Activated CD4-positive, alpha-beta T cell treated with anti-CD3 and anti-CD28 coated beads, Interleukin-2, amount 10 ng/mL, durations not matched to agents 24 days and 14 days (primary cell): ENCODE measurements at regions of chr14 and their contacts with region 1.

Region 1: DNA sequence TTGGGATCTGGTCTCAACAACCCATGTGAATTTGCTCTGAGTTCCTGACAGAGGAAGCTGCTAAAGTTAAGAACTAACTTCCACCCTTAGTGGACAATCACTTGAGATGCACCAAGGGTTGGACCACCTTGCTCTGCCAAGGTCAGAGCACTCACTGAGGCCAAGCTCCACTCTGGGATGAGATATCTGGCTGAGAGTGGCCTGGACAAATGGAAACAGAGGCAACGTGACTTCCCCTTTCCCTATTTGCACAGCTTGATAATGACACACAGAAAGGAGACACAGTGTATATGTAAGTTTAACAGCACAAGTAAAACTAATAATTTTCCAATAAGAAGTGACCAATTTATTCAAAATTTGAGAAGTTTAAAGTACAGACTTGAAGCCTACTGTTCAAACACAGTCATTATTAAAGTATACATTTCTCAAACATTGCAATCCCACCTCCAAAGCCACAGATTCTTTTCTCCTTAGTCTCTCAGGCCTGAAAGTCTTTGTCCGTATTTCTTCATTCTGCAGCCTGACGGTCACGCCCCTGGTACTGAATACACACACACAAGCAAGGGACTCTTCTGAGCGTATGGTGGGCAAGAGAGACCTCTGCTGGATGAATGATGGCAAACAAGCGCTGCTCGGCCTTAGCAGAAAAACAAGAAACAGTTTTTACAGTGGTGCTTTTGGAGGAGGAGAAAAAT is 28.6 kb downstream of the TMEM30B start:
- DNase-seq: peak; percentile 89
- H3K4me3 Mint-ChIP-seq: no peak overlapping the region
- H3K27ac Mint-ChIP-seq: no peak overlapping the region
- H3K4me1 Mint-ChIP-seq: peaks cover 15% of the 10 kb centered on the region
- H3K27me3 Mint-ChIP-seq: peaks cover 20% of the 10 kb centered on the region

Region 2: GRCh38 chr14:60349663-60350365 is 902.7 kb before region 1 on chr14:
- intact Hi-C with region 1: loop called (anchors 2 kb)
- DNase-seq: peak; percentile 72
- H3K4me3 Mint-ChIP-seq: no peak overlapping the region
- H3K27ac Mint-ChIP-seq: no peak overlapping the region
- H3K4me1 Mint-ChIP-seq: no peaks in the 10 kb centered on the region
- H3K27me3 Mint-ChIP-seq: peaks cover 24% of the 10 kb centered on the region

Region 3: GRCh38 chr14:60622917-60623257 is 629.6 kb before region 1 on chr14:
- intact Hi-C with region 1: loop called (anchors 1 kb)
- DNase-seq: no peak
- H3K4me3 Mint-ChIP-seq: no peak overlapping the region
- H3K27ac Mint-ChIP-seq: no peak overlapping the region
- H3K4me1 Mint-ChIP-seq: no peaks in the 10 kb centered on the region
- H3K27me3 Mint-ChIP-seq: peaks cover 22% of the 10 kb centered on the region

Region 4: GRCh38 chr14:60724137-60724619 is 528.3 kb before region 1 on chr14 and contains the start of gene SIX4:
- intact Hi-C with region 1: loop called (anchors 2 kb)
- DNase-seq: peak; percentile 63
- H3K4me3 Mint-ChIP-seq: peak within 1 kb of the TSS; percentile 90
- H3K27ac Mint-ChIP-seq: peak within 1 kb of the TSS; percentile 60
- H3K4me1 Mint-ChIP-seq: peaks cover 24% of the 10 kb centered on the region
- H3K27me3 Mint-ChIP-seq: peaks cover 77% of the 10 kb centered on the region
- total RNA-seq, gene SIX4: 0.23 and 0.52 TPM in 2 replicates

Region 5: DNA sequence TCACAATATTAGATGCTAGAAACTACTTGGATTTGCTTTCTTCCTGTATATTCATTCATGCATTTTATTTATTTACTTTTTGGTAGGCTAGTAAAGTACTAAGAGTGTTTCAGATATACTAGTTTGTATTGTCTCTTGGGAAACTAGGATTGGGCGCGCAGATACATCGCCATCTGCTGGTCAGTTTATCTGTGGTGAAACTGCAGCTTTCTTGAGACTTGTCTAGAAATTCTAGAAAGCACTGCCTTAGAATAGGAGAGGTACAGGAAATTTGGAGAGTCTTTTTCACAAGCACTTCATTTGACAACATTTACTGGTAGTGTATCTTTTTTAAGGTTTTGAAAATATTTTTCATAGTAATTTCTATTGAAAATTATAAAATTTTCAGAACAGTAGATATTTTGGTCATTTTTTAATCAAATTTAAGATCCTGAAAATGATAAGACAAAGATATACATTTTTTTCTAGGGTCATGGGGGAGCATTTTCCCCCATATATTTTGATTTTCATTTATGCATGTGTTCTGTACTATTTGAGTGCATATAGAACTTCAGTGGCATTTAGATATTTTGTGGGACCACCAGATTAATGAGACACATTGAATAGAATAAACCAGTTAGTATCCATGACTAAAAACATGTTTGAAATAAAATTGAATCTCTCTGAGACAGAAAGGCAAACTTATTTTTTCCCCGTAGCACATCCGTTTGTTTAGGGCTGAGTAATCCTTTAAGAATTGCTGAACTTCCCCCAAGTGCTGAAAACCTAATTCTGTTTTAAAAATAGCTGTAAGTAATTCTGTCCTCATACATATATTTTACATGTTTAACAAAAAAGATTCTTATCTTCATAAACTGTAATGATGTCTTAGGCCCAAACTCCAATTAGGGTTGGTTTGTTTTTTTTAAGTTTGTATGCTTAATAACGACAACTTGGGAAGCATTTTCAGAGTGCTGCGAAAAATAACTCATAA is 227.0 kb before region 1 on chr14:
- intact Hi-C with region 1: loop called (anchors 2 kb)
- DNase-seq: peak; percentile 87
- H3K4me3 Mint-ChIP-seq: no peak overlapping the region
- H3K27ac Mint-ChIP-seq: no peak overlapping the region
- H3K4me1 Mint-ChIP-seq: no peaks in the 10 kb centered on the region
- H3K27me3 Mint-ChIP-seq: peaks cover 2% of the 10 kb centered on the region

Region 6: DNA sequence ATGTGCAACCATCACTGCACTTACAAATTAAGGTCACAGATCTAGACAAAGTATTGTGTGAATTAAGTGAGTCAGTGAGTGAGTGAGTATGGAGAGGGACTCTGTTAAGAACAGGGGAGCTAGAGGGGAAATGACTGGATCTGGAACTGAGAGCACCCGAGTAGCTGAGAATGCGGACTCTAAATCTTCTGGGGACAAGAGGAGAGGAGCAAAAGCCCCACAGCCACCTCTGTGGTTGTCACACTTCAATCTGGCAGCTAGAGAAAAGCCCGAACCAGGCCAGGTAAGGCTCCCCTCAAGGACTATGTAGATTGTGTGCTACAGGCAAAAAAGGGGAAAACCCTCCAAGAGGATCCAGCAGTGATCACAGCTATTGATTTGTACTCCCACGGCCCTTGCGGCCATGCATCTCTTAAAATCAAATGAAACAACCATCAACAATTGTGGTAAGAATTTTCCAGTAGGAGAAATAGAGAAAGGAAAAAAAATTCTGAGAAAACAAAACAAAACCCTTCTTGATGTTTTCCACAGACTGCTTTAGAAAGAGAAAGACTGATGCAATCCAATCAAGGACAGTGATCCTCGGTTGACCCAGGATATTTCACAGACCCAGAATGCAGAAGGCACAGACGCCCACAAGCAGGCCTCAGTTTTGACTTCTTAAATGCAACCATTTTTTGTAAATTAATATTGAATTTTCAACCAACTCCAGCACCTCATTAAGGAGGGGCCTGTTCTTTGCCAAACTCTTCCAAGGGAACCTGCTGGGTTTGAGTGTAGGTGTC is 161.9 kb before region 1 on chr14:
- intact Hi-C with region 1: no loop called
- DNase-seq: no peak
- H3K4me3 Mint-ChIP-seq: no peak overlapping the region
- H3K27ac Mint-ChIP-seq: peak overlapping the region; percentile 46
- H3K4me1 Mint-ChIP-seq: peaks cover 8% of the 10 kb centered on the region
- H3K27me3 Mint-ChIP-seq: no peaks in the 10 kb centered on the region

Region 7: GRCh38 chr14:61103481-61104339 is 148.8 kb before region 1 on chr14:
- intact Hi-C with region 1: loop called (anchors 5 kb)
- DNase-seq: peak; percentile 76
- H3K4me3 Mint-ChIP-seq: peak overlapping the region; percentile 24
- H3K27ac Mint-ChIP-seq: peak overlapping the region; percentile 90
- H3K4me1 Mint-ChIP-seq: peaks cover 24% of the 10 kb centered on the region
- H3K27me3 Mint-ChIP-seq: no peaks in the 10 kb centered on the region

Region 8: GRCh38 chr14:61178226-61179060 is 74.1 kb before region 1 on chr14:
- intact Hi-C with region 1: loop called (anchors 5 kb)
- DNase-seq: peak; percentile 80
- H3K4me3 Mint-ChIP-seq: peak overlapping the region; percentile 72
- H3K27ac Mint-ChIP-seq: peak overlapping the region; percentile 87
- H3K4me1 Mint-ChIP-seq: peaks cover 42% of the 10 kb centered on the region
- H3K27me3 Mint-ChIP-seq: no peaks in the 10 kb centered on the region

Region 9: DNA sequence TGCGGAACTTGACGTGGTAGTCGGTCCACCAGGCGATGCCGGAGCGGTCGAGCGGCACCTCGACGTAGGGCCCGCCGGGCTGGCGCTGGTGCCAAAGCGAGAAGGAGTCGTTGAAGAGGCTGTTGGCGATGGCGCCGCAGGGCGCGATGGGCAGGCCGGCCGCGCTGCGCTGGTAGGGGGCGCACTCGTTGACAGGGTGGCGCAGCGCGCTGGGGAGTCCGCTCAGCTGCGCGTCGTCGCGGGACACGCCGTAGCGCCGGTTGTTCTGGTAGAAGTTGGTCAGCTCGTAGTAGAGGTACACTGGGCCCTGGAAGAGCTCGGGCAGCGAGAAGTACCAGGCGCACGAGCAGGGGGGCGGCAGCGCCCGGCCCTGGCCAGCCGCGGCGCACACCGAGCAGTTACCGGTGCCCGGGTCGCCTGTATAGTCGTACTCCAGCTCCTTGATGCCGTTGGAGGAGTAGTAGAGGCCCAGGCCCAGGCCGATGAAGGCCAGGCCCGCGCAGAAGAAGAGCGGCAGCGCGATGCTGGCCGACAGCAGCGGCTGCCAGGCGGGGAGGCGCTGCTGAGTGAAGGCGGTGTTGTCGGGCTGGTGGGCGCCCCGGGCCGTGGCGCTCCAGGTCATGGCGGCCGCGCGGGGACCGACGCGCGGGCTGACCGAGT is 28.1 kb after region 1 on chr14:
- intact Hi-C with region 1: no loop called
- DNase-seq: peak; percentile 92
- H3K4me3 Mint-ChIP-seq: peak overlapping the region; percentile 88
- H3K27ac Mint-ChIP-seq: peak overlapping the region; percentile 84
- H3K4me1 Mint-ChIP-seq: peaks cover 31% of the 10 kb centered on the region
- H3K27me3 Mint-ChIP-seq: peaks cover 29% of the 10 kb centered on the region